Dendritic cell treated with granulocyte-macrophage colony-stimulating factor and Interleukin-4, amounts not matched to agents 40 ng/mL and 50 ng/mL, for 4 days (primary cell): ENCODE measurements at regions of chr19 and their contacts with region 1.

Region 1: DNA sequence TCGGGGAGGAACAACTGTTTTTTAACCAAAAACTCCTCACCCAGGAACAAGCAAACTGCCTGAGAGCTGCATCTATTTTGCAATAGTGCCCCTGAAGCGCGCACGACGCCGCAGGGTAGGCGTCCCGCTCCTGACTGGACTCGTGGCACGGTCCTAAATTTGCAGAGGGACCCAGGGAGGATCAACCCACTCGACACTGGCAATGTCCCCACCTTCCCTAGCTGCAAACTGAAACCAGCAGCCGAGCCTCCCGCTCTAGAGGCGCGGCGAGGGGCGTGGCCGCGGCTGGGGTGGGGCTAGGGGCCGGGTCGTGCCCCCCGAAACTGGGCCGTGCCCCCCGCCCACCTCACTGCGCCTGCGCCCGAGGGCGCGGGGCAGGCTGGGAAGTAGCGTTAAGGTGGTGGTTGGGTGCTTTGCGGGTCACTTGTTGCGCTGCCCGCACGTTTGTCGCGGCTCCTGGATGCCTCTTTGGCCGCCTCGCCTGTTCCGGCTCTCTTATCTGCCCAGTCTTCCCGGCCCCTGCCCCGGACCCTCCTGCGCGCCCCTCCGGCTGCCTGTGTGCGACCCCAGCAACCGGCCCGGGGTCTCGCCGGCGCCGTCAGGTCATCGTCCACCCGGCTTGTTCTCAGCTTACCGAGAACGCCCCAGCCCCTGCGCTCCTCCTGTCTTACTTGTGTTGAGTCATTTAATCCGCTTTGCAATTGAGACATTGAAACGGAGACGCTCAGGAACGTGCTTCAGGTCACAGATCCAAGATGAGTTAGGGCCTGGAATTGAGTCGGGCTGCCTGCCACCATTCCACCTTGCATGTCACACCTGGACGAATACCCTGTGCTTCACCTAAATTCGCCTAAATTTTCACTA is 37.9 kb upstream of the LSM14A start:
- H3K4me3 Mint-ChIP-seq: peak overlapping the region; percentile 86
- H3K27ac Mint-ChIP-seq: peak overlapping the region; percentile 90
- H3K4me1 Mint-ChIP-seq: no peaks in the 10 kb centered on the region
- H3K27me3 Mint-ChIP-seq: peaks cover 12% of the 10 kb centered on the region

Region 2: GRCh38 chr19:34171877-34172660 is 37.6 kb after region 1 on chr19 and contains the start of gene LSM14A:
- intact Hi-C with region 1: loop called (anchors 2 kb)
- H3K4me3 Mint-ChIP-seq: peak within 1 kb of the TSS; percentile 90
- H3K27ac Mint-ChIP-seq: peak within 1 kb of the TSS; percentile 99
- H3K4me1 Mint-ChIP-seq: peaks cover 59% of the 10 kb centered on the region
- H3K27me3 Mint-ChIP-seq: no peaks in the 10 kb centered on the region